Activated T-helper 2 cell treated with anti-CD3 and anti-CD28 coated beads, Interferon-gamma antibody, Interleukin-2, Interleukin-4, amounts not matched to agents 10 μg/mL and 5 μg/mL and 100 μg/mL, durations not matched to agents 14 hours and 24 hours and 36 hours (primary cell): ENCODE measurements at regions of chr3 and their contacts with region 1.

Region 1: DNA sequence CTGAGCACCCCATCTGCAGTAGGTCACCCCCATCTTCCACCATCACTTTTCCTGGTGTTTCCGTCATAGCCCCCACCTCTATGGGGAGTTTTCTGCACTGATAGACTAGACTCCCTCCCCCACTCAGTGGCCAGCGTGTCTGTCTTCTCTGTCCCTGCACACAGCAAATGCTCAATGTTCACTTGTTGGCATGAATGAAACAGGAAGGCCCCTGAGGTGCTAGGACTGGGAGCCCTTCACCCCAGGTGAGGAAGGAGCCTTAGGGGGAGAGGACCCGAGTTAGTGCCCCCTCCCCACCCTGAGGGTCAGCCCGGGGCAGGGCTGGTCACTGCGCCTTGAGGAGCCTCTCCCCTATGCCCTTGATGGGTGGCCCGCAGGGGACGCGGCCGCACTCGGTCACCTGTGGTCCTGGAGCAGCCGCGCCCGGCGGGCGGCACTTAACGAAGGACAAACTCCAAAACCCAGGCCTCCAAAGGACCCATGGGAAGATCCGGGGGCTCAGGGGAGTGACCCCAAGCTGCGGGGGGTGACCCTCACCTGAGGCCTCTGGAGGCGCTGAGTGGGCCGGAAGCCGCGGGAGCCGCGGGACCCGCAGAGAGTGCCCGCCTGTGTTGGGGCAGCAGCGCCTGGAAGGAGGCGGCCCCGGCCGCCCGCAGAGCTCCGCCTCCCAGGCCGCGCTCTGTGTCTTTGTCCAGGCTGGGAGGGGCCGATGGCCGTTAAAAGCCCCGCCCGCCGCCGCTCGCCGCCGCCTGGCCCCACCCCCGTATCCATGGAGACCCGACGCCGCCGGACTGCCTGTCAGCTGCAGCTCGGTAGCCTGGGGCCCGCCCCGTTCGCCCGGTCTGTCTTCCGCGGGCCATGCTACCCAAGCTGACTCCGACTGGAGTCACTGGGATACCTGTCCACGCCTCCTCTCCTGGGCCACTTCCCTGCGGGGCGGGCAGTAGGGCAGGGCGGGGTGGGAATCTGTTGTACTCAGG is 15.5 kb upstream of the FANCD2 start:
- DNase-seq: peak; percentile 86
- H3K4me3 Mint-ChIP-seq: peak overlapping the region; percentile 42
- H3K27ac Mint-ChIP-seq: no peak overlapping the region
- H3K4me1 Mint-ChIP-seq: peaks cover 14% of the 10 kb centered on the region
- H3K27me3 Mint-ChIP-seq: no peaks in the 10 kb centered on the region

Region 2: GRCh38 chr3:9986237-9986725 is 24.5 kb before region 1 on chr3:
- intact Hi-C with region 1: loop called (anchors 1 kb)
- DNase-seq: no peak
- H3K4me3 Mint-ChIP-seq: peak overlapping the region; percentile 96
- H3K27ac Mint-ChIP-seq: peak overlapping the region; percentile 99
- H3K4me1 Mint-ChIP-seq: peaks cover 18% of the 10 kb centered on the region
- H3K27me3 Mint-ChIP-seq: no peaks in the 10 kb centered on the region